HepG2 (cell line): ENCODE measurements at regions of chr3 and their contacts with region 1.

Region 1: DNA sequence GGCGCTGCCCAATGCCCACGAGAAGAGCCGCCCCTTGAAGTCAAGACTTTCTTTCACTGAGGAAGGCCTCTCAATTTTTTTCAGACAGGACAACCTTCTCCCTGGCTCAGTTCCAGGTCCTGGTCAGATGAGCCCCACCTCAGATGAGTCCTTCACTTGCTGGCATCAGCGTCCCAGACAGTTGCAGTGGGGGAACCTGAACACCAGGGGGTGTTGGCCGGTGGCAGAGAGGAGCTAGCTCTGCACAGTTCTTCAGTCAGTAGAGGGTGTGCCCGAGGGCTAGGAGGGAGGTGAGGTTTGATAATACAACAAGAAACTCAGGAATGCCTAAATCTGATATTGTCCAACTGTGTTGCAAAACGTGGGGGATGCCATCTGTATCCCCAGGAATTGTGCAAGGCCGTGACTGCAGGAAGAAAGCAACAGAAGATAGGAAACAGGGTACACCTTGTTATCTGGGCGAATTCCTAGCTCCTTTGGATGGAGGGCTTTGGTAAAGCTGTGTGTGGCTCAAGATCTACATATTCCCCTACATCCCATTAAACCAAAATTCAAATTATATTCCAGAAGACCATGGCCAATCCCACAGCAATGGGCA is 34.3 kb downstream of the CCR3 start:
- DNase-seq: peak; percentile 20
- ATAC-seq: peak; percentile 93
- H3K4me3 ChIP-seq: no peak overlapping the region
- H3K27ac ChIP-seq: no peak overlapping the region
- H3K4me1 ChIP-seq: no peaks in the 10 kb centered on the region
- H3K27me3 ChIP-seq: peaks cover 0 to 6% of the 10 kb centered on the region in 2 experiments; a peak in 1 of 5 replicates
- CTCF ChIP-seq: peak; percentile 74
- EP300 ChIP-seq: no peak
- POLR2A ChIP-seq: no peak
- RAD21 ChIP-seq: 0 out of 2 replicates have a peak, but pooled peaks have one; percentile 27

Region 2: GRCh38 chr3:46372492-46373359 is 96.1 kb after region 1 on chr3:
- CTCF ChIA-PET with region 1: interaction called, 16 read pairs
- POLR2A ChIA-PET with region 1: no interaction called
- in situ Hi-C with region 1: no loop called
- intact Hi-C with region 1: loop called (anchors 2 kb)
- DNase-seq: no peak
- ATAC-seq: no peak
- H3K4me3 ChIP-seq: no peak overlapping the region
- H3K27ac ChIP-seq: no peak overlapping the region
- H3K4me1 ChIP-seq: peaks cover 8% of the 10 kb centered on the region
- H3K27me3 ChIP-seq: peaks cover 2 to 12% of the 10 kb centered on the region in 2 experiments; a peak in 3 of 5 replicates
- CTCF ChIP-seq: peak; percentile 38
- EP300 ChIP-seq: no peak
- POLR2A ChIP-seq: no peak
- RAD21 ChIP-seq: no peak

Region 3: DNA sequence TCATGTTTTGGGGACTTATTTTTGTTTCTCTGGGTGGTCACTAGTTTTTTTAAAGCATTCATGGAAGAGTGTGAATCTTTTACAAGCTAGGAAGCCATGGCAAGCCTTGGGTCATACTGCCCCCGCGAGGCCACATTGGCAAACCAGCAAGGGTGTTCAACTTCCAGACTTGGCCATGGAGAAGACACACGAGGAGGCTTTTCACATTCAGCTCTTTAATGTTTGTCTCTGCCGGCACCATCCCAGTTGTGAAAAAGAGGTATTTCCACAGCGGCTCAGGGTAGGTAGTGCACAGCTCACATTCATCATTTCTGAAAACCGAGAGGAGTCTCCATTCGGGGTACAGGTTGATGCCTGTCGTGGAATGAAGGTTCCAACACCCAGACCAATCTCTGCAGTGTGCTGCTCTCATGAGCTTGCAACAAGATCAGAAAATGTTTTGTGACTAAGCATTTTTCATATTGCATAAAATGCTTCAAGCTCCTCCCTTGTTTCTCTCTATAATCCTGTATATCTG is 101.9 kb after region 1 on chr3:
- CTCF ChIA-PET with region 1: interaction called, 16 read pairs
- POLR2A ChIA-PET with region 1: no interaction called
- in situ Hi-C with region 1: no loop called
- intact Hi-C with region 1: loop called (anchors 2 kb)
- DNase-seq: peak; percentile 27
- ATAC-seq: peak; percentile 84
- H3K4me3 ChIP-seq: no peak overlapping the region
- H3K27ac ChIP-seq: no peak overlapping the region
- H3K4me1 ChIP-seq: no peaks in the 10 kb centered on the region
- H3K27me3 ChIP-seq: peaks cover 3 to 5% of the 10 kb centered on the region in 2 experiments; a peak in 4 of 5 replicates
- CTCF ChIP-seq: peak; percentile 80
- EP300 ChIP-seq: no peak
- POLR2A ChIP-seq: no peak
- RAD21 ChIP-seq: peak; percentile 28; the same call in 1 of the 2 replicates